ENCODE measurements at regions of chr15 and their contacts with region 1.

Region 1: DNA sequence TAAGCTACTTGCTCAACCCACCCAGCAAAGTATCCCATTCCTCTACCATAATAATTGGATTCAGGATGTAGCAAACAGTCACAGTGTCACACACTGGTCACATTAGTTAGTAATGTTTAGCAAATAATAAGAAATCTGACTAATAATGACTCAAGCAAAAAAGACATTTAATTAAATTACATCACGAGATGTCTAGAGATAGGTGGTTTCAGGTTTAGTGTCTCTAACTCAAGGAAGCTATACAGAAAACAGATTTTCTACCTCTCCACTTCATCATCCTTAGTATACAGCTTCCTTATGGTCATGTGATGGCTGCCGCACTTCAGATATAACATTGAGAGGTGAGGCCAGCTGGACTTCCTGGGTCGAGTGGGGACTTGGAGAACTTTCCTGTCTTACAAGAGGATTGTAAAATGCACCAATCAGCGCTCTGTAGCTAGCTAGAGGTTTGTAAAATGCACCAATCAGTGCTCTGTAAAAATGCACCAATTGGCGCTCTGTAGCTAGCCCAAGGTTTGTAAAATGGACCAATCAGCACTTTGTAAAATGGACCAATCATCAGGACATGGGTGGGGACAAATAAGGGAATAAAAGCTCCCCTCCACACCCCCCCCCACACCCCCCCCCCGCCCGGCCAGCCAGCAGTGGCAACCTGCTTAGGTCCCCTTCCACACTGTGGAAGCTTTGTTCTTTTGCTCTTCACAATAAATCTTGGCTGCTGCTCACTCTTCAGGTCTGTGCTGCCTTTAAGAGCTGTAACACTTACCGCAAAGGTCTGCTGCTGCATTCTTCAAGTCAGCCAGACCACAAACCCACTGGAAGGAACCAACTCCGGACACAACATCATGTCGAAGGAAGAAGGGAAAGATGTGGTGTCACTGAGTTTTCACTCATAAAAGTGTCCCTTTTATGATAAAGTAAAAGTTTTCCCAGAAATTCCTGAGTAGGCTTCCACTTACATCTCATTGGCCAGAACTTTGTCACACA is 24.9 kb upstream of the ARPIN start:
- DNase-seq: no peak
- ATAC-seq: no peak
- H3K4me3 ChIP-seq: no peak overlapping the region
- H3K27ac ChIP-seq: no peak overlapping the region
- H3K4me1 ChIP-seq: no peaks in the 10 kb centered on the region
- H3K27me3 ChIP-seq: no peaks in the 10 kb centered on the region
- CTCF ChIP-seq: no peak

Region 2: DNA sequence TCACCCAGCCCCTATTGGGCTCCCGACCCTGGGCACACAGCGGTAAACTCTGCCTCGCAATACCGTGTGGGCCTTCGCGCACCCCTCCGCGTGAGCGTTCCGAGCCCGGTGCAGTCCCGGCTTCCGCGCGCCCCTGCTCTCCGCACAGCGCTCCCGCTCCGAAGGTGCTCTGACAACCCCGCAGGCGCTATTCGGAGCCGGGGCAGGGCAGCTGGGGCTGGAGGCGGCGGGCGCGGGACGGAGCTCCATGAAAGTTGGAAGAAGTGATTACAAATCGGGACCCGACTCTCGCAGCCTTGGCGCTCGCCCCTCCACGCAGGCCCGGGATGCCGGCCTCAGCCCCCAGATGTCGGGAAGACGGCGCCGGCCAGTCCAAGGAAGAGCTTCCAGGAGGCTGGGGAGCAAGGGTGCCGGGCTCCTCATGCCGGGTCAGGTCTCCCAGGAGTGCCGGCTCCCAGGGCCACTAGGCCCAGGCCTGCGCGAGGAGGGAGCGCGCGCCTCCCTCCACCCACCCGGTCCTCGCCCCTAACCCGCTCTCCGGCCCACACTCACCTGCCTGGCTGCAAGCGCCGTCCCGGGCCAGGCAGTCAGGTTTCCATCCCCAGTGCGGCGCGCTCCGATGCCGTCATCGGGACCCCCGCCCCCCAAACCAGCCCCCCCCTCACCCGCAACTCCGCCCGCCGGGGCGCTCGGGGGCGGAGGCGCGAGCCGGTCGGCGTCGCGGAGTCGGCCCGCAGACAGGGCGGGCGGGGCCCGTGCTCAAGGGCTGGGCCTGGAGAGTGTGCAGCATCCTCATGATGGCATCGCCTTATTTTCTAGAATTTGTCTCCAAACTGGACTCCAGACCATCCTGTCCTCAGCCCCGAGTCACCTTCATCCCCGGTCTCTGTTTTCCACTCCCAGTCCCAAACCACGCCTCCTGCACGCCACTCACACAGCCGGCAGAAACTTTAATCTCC is 282.5 kb before region 1 on chr15 and contains the start of gene KIF7:
- CTCF ChIA-PET with region 1: no interaction called
- POLR2A ChIA-PET with region 1: interaction called, 15 read pairs
- in situ Hi-C with region 1: no loop called
- intact Hi-C with region 1: no loop called
- DNase-seq: no peak
- ATAC-seq: peak; percentile 82
- H3K4me3 ChIP-seq: peak within 1 kb of the TSS; percentile 59 to 60
- H3K27ac ChIP-seq: peak within 1 kb of the TSS; percentile 35; the same call in 1 of the 2 replicates
- H3K4me1 ChIP-seq: no peaks in the 10 kb centered on the region
- H3K27me3 ChIP-seq: no peaks in the 10 kb centered on the region; the same call in 1 of the 2 replicates
- CTCF ChIP-seq: no peak
- total RNA-seq, gene KIF7: 6.5 TPM

Region 3: DNA sequence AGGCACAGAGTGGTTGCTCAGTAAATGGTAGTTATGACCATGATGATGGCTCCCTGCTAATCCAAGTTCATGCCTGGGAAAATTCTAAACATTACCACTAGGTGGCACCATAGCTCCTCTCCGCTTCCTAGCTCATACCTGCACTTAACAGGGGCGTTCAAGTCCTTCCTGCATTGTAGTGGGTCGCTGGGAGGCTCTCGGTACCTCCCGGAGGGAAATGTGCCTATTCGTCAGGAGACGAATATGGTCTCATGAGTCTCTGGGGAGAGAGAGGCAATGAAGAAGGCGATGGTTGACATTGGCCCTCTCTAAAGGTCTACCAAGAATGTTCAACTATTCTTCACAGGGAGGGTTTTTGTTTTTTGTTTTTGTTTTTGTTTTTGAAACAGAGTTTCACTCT is 197.5 kb before region 1 on chr15:
- CTCF ChIA-PET with region 1: no interaction called
- POLR2A ChIA-PET with region 1: no interaction called
- in situ Hi-C with region 1: no loop called
- intact Hi-C with region 1: no loop called
- DNase-seq: peak; percentile 72
- ATAC-seq: peak; percentile 96
- H3K4me3 ChIP-seq: no peak overlapping the region; a peak in 1 of 4 replicates
- H3K27ac ChIP-seq: no peak overlapping the region
- H3K4me1 ChIP-seq: no peaks in the 10 kb centered on the region
- H3K27me3 ChIP-seq: no peaks in the 10 kb centered on the region
- CTCF ChIP-seq: peak; percentile 94

Region 4: DNA sequence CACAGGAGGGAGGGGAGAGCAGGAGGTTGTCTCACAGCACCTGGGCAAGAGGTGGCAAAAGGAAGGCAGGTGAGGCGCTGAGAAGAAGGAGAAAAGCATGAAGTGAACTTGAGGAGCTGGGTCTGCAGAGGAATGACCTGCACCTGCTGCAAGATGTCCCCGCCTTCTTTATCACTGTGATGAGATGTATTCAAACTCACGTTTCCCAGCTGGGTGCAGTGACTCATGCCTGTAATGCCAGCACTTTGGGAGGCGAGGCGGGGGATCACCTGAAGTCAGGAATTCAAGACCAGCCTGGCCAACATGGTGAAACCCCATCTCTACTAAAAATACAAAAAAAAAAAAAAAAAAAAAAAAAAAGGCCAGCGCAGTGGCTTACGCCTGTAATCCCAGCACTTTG is 41.3 kb after region 1 on chr15:
- CTCF ChIA-PET with region 1: no interaction called
- POLR2A ChIA-PET with region 1: interaction called, 11 read pairs
- in situ Hi-C with region 1: no loop called
- intact Hi-C with region 1: no loop called
- DNase-seq: no peak
- ATAC-seq: no peak
- H3K4me3 ChIP-seq: no peak overlapping the region
- H3K27ac ChIP-seq: no peak overlapping the region
- H3K4me1 ChIP-seq: no peaks in the 10 kb centered on the region
- H3K27me3 ChIP-seq: no peaks in the 10 kb centered on the region
- CTCF ChIP-seq: no peak